CD4-positive, alpha-beta memory T cell (primary cell): ENCODE measurements at regions of chr22 and their contacts with region 1.

Region 1: DNA sequence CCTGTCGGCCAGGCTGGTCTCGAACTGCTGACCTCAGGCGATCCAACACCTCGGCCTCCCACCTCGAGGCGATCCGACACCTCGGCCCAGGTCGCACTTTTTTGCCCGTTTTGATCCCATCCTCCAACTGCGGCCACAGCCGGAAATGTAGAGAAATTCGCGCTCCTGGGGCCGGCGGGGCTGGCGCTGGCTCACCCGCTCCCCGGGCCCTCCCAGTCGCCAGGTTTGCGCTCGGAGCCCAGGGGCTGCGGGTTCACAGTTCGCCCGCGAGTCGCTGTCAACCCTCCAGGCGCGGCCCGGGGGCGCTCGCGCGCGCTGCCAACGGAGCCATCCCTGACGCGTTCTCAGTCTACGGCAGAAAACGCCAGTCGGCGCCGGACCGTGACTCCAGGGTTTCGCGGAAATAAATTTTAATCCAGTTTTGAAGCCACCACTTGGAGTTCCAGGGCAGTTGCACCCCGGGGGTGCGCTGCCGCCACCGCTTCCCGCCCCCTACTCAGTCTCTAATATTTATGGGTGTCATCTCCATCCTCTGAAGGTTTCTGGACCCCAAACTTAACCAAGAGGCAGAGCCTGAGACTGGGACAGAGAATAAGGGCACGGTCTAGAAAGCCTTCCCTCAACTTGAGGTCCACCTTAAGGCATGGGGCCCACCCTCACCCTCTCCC is 1.5 kb upstream of the KLHDC7B start:
- DNase-seq: peak; percentile 72 to 82 (median 76)
- H3K4me3 ChIP-seq: peak overlapping the region; percentile 24 to 51
- H3K4me3 Mint-ChIP-seq: peak overlapping the region in 7 of 8 donors; percentile 64 to 79 (median 69)
- H3K27ac ChIP-seq: peak overlapping the region; percentile 59
- H3K27ac Mint-ChIP-seq: peak overlapping the region; percentile 42 to 91 (median 85)
- H3K4me1 ChIP-seq: peaks cover 51% of the 10 kb centered on the region
- H3K4me1 Mint-ChIP-seq: peaks cover 26 to 62% (median 42%) of the 10 kb centered on the region in 4 donors
- H3K27me3 ChIP-seq: no peaks in the 10 kb centered on the region
- H3K27me3 Mint-ChIP-seq: no peaks in the 10 kb centered on the region

Region 2: DNA sequence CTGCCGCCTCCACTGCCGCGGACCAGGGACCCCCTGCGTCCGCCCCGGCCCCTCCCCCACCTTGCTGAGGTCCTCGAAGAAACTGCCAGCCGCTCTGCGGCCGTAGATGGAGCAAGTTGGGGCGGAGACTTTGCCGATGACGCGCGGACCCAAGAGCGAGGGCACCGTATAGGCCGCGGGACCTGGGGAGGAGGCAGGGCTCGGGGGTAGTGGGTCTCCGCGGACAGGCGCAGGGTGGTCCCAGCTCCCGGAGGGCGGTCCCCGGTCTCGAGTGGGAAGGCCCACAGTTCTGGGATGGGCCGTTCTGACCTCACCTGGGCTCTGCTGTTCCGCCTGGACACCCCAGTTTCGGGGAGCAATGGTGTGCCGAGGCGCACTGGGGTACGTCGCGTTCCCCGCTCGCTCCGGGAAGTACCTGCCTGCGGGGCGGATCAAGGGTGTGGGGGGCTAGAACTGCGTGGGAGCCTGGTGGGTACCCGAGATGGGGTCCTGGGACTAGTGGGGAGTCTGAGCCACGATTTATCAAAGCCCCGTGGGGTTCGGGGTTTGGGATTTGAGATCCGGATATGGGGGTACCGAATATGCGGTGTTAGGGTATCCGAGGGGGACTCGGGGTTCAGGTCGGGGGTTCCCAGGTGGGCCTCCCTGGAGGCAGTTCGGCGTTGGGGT is 13.2 kb before region 1 on chr22:
- CTCF ChIA-PET with region 1: interaction called, 135 read pairs
- POLR2A ChIA-PET with region 1: interaction called, 321 read pairs
- intact Hi-C with region 1: loop called (anchors 1 kb)
- DNase-seq: peak; percentile 72 to 82 (median 77)
- H3K4me3 ChIP-seq: peak overlapping the region; percentile 76 to 94
- H3K4me3 Mint-ChIP-seq: peak overlapping the region; percentile 89 to 95 (median 92)
- H3K27ac ChIP-seq: peak overlapping the region; percentile 96
- H3K27ac Mint-ChIP-seq: peak overlapping the region; percentile 96 to 99 (median 97)
- H3K4me1 ChIP-seq: peaks cover 54% of the 10 kb centered on the region
- H3K4me1 Mint-ChIP-seq: peaks cover 15 to 54% (median 38%) of the 10 kb centered on the region in 4 donors
- H3K27me3 ChIP-seq: no peaks in the 10 kb centered on the region
- H3K27me3 Mint-ChIP-seq: no peaks in the 10 kb centered on the region

Region 3: GRCh38 chr22:50556703-50557102 is 12.5 kb after region 1 on chr22:
- CTCF ChIA-PET with region 1: interaction called, 11 read pairs
- POLR2A ChIA-PET with region 1: interaction called, 33 read pairs
- intact Hi-C with region 1: no loop called
- DNase-seq: no peak
- H3K4me3 ChIP-seq: no peak overlapping the region
- H3K4me3 Mint-ChIP-seq: no peak overlapping the region
- H3K27ac ChIP-seq: no peak overlapping the region
- H3K27ac Mint-ChIP-seq: no peak overlapping the region
- H3K4me1 ChIP-seq: no peaks in the 10 kb centered on the region
- H3K4me1 Mint-ChIP-seq: peaks cover 5 to 11% (median 10%) of the 10 kb centered on the region in 4 donors
- H3K27me3 ChIP-seq: no peaks in the 10 kb centered on the region
- H3K27me3 Mint-ChIP-seq: no peaks in the 10 kb centered on the region

Region 4: GRCh38 chr22:50562523-50563412 is 18.6 kb after region 1 on chr22 and contains the start of gene SYCE3:
- CTCF ChIA-PET with region 1: interaction called, 19 read pairs
- POLR2A ChIA-PET with region 1: interaction called, 31 read pairs
- intact Hi-C with region 1: loop called (anchors 2 kb)
- DNase-seq: peak; percentile 94 to 97 (median 95)
- H3K4me3 ChIP-seq: peak within 1 kb of the TSS; percentile 62 to 78
- H3K4me3 Mint-ChIP-seq: peak within 1 kb of the TSS; percentile 92 to 97 (median 95)
- H3K27ac ChIP-seq: peak within 1 kb of the TSS; percentile 55
- H3K27ac Mint-ChIP-seq: peak within 1 kb of the TSS; percentile 78 to 96 (median 91)
- H3K4me1 ChIP-seq: peaks cover 8% of the 10 kb centered on the region
- H3K4me1 Mint-ChIP-seq: peaks cover 13 to 25% (median 20%) of the 10 kb centered on the region in 4 donors
- H3K27me3 ChIP-seq: no peaks in the 10 kb centered on the region
- H3K27me3 Mint-ChIP-seq: peaks cover 0 to 2% of the 10 kb centered on the region in 2 donors
- total RNA-seq, gene SYCE3: not detected

Region 5: DNA sequence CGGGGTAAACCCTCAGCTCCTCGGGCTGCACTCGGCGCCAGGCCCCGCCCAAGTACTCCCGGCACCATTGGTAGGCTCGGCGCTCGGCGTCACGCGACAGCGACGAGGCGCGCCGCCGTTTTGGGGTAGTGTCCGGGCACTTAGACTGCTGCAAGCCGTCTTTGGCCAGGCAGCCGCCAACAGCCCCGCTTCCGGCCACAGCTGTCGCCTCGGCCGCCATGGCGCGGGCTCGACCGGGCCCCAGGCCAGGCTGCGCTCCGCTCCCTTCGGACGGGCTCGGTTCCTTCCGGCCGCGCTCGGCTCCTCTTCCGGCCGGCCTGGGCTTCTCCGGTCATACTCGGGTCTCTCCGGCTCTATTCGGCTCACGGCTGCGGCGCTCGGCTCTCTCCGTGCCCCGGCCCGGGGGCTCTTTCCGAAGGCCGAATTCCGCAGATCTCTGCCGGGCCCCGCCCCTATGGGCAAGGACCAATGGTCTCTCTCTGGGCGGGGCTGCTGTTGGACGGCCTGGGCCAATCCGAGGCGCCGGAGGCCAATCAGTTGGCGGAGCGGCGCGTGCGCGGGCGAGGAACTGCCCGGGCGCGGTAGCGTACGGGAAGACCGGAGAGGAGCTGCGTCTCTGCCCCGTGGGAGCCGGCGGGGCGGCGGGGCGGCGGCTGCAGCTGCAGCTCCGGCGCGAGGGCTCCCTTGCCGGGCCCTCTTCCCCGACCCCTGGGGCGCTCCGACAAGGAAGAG is 38.5 kb after region 1 on chr22 and contains the start of gene CHKB:
- CTCF ChIA-PET with region 1: interaction called, 3 read pairs
- POLR2A ChIA-PET with region 1: interaction called, 28 read pairs
- intact Hi-C with region 1: loop called (anchors 1 kb)
- DNase-seq: peak; percentile 98 to 99 (median 98)
- H3K4me3 ChIP-seq: peak within 1 kb of the TSS; percentile 63 to 91
- H3K4me3 Mint-ChIP-seq: peak within 1 kb of the TSS; percentile 90 to 96 (median 93)
- H3K27ac ChIP-seq: peak within 1 kb of the TSS; percentile 97
- H3K27ac Mint-ChIP-seq: peak within 1 kb of the TSS; percentile 91 to 98 (median 96)
- H3K4me1 ChIP-seq: peaks cover 21% of the 10 kb centered on the region
- H3K4me1 Mint-ChIP-seq: peaks cover 8 to 39% (median 16%) of the 10 kb centered on the region in 4 donors
- H3K27me3 ChIP-seq: no peaks in the 10 kb centered on the region
- H3K27me3 Mint-ChIP-seq: no peaks in the 10 kb centered on the region
- total RNA-seq, gene CHKB: 178 to 196 TPM

Region 6: GRCh38 chr22:50627642-50628542 is 83.7 kb after region 1 on chr22 and contains the start of gene ARSA:
- CTCF ChIA-PET with region 1: interaction called, 3 read pairs
- POLR2A ChIA-PET with region 1: interaction called, 34 read pairs
- intact Hi-C with region 1: loop called (anchors 1 kb)
- DNase-seq: peak; percentile 81 to 84 (median 81)
- H3K4me3 ChIP-seq: peak within 1 kb of the TSS; percentile 57 to 90
- H3K4me3 Mint-ChIP-seq: peak within 1 kb of the TSS; percentile 83 to 95 (median 90)
- H3K27ac ChIP-seq: peak within 1 kb of the TSS; percentile 84
- H3K27ac Mint-ChIP-seq: peak within 1 kb of the TSS; percentile 88 to 97 (median 91)
- H3K4me1 ChIP-seq: peaks cover 29% of the 10 kb centered on the region
- H3K4me1 Mint-ChIP-seq: peaks cover 10 to 28% (median 18%) of the 10 kb centered on the region in 4 donors
- H3K27me3 ChIP-seq: no peaks in the 10 kb centered on the region
- H3K27me3 Mint-ChIP-seq: no peaks in the 10 kb centered on the region
- total RNA-seq, gene ARSA: 83.2 to 86.8 TPM

Region 7: GRCh38 chr22:50656122-50657070 is 112.2 kb after region 1 on chr22:
- CTCF ChIA-PET with region 1: no interaction called
- POLR2A ChIA-PET with region 1: no interaction called
- intact Hi-C with region 1: no loop called
- DNase-seq: no peak
- H3K4me3 ChIP-seq: no peak overlapping the region
- H3K4me3 Mint-ChIP-seq: no peak overlapping the region
- H3K27ac ChIP-seq: no peak overlapping the region
- H3K27ac Mint-ChIP-seq: peak overlapping the region in 1 of 7 donors; percentile 41
- H3K4me1 ChIP-seq: no peaks in the 10 kb centered on the region
- H3K4me1 Mint-ChIP-seq: no peaks in the 10 kb centered on the region
- H3K27me3 ChIP-seq: no peaks in the 10 kb centered on the region
- H3K27me3 Mint-ChIP-seq: peaks cover 12 to 21% of the 10 kb centered on the region in 2 donors

Region 8: GRCh38 chr22:50691521-50691920 is 147.3 kb after region 1 on chr22:
- CTCF ChIA-PET with region 1: interaction called, 3 read pairs
- POLR2A ChIA-PET with region 1: no interaction called
- intact Hi-C with region 1: loop called (anchors 1 kb)
- DNase-seq: peak in 4 of 5 donors; percentile 27 to 33 (median 30)
- H3K4me3 ChIP-seq: no peak overlapping the region
- H3K4me3 Mint-ChIP-seq: no peak overlapping the region
- H3K27ac ChIP-seq: no peak overlapping the region
- H3K27ac Mint-ChIP-seq: no peak overlapping the region
- H3K4me1 ChIP-seq: no peaks in the 10 kb centered on the region
- H3K4me1 Mint-ChIP-seq: no peaks in the 10 kb centered on the region
- H3K27me3 ChIP-seq: no peaks in the 10 kb centered on the region
- H3K27me3 Mint-ChIP-seq: peaks cover 4% of the 10 kb centered on the region in 2 donors